Sciatic nerve (tissue), 2 donors: ENCODE measurements at regions of chr10 and their contacts with region 1.

Region 1: DNA sequence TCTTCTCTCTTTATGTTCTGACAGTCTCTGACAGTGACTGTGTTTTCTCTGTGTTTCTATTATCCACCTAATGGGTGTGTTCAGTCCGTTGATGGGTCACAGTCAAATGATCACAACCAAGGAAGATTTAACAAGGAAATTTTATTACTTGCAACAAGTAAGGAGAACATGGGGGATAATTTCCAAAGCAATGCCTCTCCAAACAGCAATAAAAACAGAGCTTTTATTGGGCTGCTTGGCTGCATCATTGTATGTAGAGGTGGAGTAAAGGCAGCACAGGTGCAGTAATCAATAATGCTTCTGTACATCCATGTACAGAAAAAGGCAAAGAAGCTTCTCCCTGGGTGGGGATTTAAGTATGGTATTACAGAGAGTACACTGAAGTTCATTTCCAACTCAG is 1525.6 kb downstream of the REEP3 start:
- DNase-seq: no peak
- ATAC-seq: no peak

Region 2: DNA sequence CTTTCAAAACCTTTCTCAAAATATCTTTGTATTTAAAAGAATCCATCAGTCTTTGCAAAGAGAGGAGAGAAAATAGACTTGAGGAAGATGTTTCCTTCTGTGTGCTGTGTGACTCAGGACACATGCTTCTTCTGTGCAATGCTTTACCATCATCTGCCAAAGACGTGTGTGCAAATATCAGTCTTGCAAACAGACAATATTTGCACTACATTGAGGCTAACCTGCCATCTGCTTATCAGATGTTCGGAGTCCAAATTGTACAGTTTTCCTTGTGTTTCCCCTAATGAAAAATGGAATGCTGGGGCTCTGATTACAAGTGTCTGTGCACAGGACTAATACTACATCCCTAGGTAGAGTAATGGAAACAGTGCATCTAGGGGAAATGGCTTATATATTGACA is 1525.9 kb after region 1 on chr10:
- intact Hi-C with region 1: loop called (anchors 5 kb)
- DNase-seq: no peak
- ATAC-seq: no peak